Activated B cell treated with CpG ODN at 0.5 μM for 24 hours (primary cell): ENCODE measurements at regions of chr2 and their contacts with region 1.

Region 1: GRCh38 chr2:211730215-211730614 is 808.4 kb downstream of the ERBB4 start:
- DNase-seq: no peak
- ATAC-seq: no peak
- H3K4me3 Mint-ChIP-seq: no peak overlapping the region
- H3K27ac Mint-ChIP-seq: no peak overlapping the region
- H3K4me1 Mint-ChIP-seq: no peaks in the 10 kb centered on the region
- H3K27me3 Mint-ChIP-seq: no peaks in the 10 kb centered on the region
- CTCF ChIP-seq: no peak

Region 2: GRCh38 chr2:210456571-210456970 is 1273.6 kb before region 1 on chr2:
- CTCF ChIA-PET with region 1: no interaction called
- POLR2A ChIA-PET with region 1: no interaction called
- intact Hi-C with region 1: no loop called
- DNase-seq: no peak
- ATAC-seq: no peak
- H3K4me3 Mint-ChIP-seq: no peak overlapping the region
- H3K27ac Mint-ChIP-seq: no peak overlapping the region
- H3K4me1 Mint-ChIP-seq: peaks cover 49% of the 10 kb centered on the region
- H3K27me3 Mint-ChIP-seq: no peaks in the 10 kb centered on the region
- CTCF ChIP-seq: no peak

Region 3: GRCh38 chr2:211745295-211746097 is 15.3 kb after region 1 on chr2:
- CTCF ChIA-PET with region 1: interaction called, 10 read pairs
- POLR2A ChIA-PET with region 1: no interaction called
- intact Hi-C with region 1: no loop called
- DNase-seq: no peak
- ATAC-seq: peak; percentile 49
- H3K4me3 Mint-ChIP-seq: no peak overlapping the region
- H3K27ac Mint-ChIP-seq: no peak overlapping the region
- H3K4me1 Mint-ChIP-seq: no peaks in the 10 kb centered on the region
- H3K27me3 Mint-ChIP-seq: no peaks in the 10 kb centered on the region
- CTCF ChIP-seq: no peak

Region 4: DNA sequence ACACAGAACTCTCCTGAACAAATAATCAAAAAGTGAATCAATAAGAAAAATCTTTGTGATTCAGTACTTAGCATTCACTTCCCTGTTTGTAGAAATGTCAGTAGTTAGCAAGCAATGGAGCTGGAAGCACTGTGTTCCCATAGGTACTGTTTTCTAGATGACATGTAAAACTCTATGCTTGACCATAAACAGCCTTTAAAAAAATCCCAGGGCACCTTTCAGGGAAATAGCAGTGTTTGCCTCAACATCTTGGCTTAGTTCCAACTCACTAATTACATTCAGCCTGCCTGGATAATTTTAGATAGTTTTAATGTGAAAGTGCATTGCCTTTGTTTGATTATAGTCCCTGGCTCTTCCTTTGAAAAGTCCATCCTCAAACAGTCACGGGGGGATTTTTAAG is 86.5 kb after region 1 on chr2:
- CTCF ChIA-PET with region 1: no interaction called
- POLR2A ChIA-PET with region 1: no interaction called
- intact Hi-C with region 1: no loop called
- DNase-seq: no peak
- ATAC-seq: no peak
- H3K4me3 Mint-ChIP-seq: no peak overlapping the region
- H3K27ac Mint-ChIP-seq: no peak overlapping the region
- H3K4me1 Mint-ChIP-seq: no peaks in the 10 kb centered on the region
- H3K27me3 Mint-ChIP-seq: no peaks in the 10 kb centered on the region
- CTCF ChIP-seq: no peak